Gastrocnemius medialis (tissue), 4 donors: ENCODE measurements at regions of chr6 and their contacts with region 1.

Region 1: DNA sequence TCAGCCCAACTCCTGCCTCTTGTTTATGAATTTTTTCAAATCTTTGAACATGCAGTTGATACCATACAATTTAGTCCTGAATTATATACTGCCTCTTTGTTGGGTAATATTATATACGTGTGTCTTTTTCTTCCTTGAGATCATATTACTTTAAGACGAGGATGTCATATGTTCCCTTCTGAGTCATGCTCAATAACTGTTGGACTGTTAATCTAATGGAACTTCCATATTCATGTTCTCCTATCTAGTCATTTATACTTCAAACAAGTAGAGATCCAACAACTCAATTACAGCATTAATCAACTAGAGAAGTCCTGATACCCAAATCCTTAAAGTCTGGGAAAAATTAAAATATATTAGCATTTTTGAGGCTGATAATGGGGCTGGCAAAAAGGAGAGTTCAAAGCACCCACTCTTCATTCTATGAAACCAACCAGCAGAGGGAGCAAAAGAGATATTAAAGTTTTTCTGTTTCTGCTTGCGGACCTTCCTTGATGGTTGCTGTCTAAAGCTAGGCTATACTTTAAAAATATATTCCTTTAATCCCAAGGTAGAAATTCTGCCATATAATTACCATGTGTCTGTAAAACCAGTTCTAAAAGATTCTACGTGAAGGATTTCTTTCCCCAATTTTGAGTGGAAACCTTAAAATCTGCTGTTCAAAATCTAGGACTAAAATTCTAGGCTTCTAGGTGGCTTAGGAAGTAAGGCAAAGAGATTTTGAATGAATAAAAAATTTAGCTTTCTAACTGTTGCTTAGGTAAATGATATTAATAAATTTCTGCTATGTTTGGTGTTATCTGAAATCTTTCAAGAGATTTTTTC is 498.9 kb downstream of the BCKDHB start:
- DNase-seq: no peak
- ATAC-seq: peak in 1 of 2 donors; percentile 42
- H3K4me3 ChIP-seq: no peak overlapping the region
- H3K27ac ChIP-seq: no peak overlapping the region
- H3K4me1 ChIP-seq: peaks cover 14 to 17% of the 10 kb centered on the region in 2 donors
- H3K27me3 ChIP-seq: no peaks in the 10 kb centered on the region
- CTCF ChIP-seq: peak; percentile 17 to 62 (median 35)
- POLR2A ChIP-seq: no peak

Region 2: GRCh38 chr6:79586548-79586947 is 1018.8 kb before region 1 on chr6:
- in situ Hi-C with region 1: no loop called
- intact Hi-C with region 1: no loop called
- DNase-seq: no peak
- ATAC-seq: no peak
- H3K4me3 ChIP-seq: no peak overlapping the region
- H3K27ac ChIP-seq: no peak overlapping the region
- H3K4me1 ChIP-seq: no peaks in the 10 kb centered on the region
- H3K27me3 ChIP-seq: no peaks in the 10 kb centered on the region
- CTCF ChIP-seq: no peak
- POLR2A ChIP-seq: no peak

Region 3: GRCh38 chr6:82040405-82041221 is 1435.2 kb after region 1 on chr6:
- in situ Hi-C with region 1: loop called in 1 of 4 experiments (anchors 25 kb)
- intact Hi-C with region 1: no loop called
- DNase-seq: no peak
- ATAC-seq: peak; percentile 63 to 64
- H3K4me3 ChIP-seq: no peak overlapping the region
- H3K27ac ChIP-seq: no peak overlapping the region
- H3K4me1 ChIP-seq: no peaks in the 10 kb centered on the region
- H3K27me3 ChIP-seq: no peaks in the 10 kb centered on the region
- CTCF ChIP-seq: peak; percentile 6 to 54 (median 40)
- POLR2A ChIP-seq: no peak